ENCODE measurements at regions of chr10 and their contacts with region 1.

Region 1: DNA sequence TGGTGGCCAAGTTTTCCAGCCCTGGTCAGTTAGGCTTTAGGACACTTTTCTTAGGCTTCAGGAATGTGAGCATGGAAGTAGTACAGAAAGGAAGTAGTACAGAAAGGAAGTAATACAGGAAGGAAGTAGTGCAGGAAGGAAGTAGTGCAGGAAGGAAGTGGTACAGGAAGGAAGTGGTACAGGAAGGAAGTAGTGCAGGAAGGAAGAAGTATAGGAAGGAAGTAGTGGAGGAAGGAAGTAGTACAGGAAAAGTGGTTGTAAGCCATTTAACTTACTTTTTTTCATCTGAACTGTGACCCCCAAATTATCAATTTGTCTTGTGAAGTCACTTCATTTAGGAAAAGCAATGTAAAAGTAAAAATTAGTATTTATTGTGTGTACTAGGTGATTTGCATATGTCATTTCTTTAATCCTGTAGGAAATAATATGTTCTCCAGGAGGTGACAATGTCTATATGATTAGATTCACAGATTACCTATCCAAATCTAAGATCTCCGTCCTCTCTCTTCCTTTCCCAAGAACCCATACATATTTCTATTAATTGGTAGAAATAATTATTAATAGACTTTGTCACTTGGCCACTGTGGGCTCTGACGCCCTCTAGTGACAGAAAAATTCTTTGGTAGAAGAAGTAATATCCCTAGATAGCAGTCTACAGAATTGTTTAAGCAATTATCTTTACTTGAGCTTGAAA is 3.9 kb upstream of the FAS start:
- DNase-seq: peak; percentile 54
- H3K4me3 ChIP-seq: no peak overlapping the region
- H3K27ac ChIP-seq: no peak overlapping the region
- H3K4me1 ChIP-seq: peaks cover 18% of the 10 kb centered on the region
- H3K27me3 ChIP-seq: no peaks in the 10 kb centered on the region
- CTCF ChIP-seq: peak; percentile 67 to 78 (median 72)
- POLR2A ChIP-seq: no peak

Region 2: DNA sequence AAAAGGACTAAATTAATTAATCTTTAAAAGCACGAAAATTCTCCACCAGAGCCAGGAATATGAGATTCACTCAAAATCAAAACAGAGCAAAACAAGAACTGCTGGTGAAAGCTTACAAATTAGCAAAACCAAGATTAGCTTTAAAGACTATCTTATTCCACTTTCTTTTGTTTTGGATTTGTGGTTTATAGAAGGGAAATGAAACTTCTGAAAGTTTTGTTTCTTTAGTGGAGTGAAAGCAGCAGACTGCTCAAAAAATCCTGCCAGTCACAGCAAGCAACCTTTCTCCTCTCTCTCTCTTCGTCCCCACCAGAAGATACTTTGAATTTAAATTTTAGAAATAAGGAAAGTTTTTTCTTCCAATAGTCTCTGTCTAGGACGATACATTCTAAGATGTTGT is 41.9 kb before region 1 on chr10:
- intact Hi-C with region 1: loop called (anchors 5 kb)
- DNase-seq: no peak
- H3K4me3 ChIP-seq: no peak overlapping the region
- H3K27ac ChIP-seq: peak overlapping the region in 1 of 2 donors; percentile 32
- H3K4me1 ChIP-seq: no peaks in the 10 kb centered on the region
- H3K27me3 ChIP-seq: no peaks in the 10 kb centered on the region
- CTCF ChIP-seq: no peak
- POLR2A ChIP-seq: no peak